Transverse colon (tissue), 4 donors: ENCODE measurements at regions of chr21 and their contacts with region 1.

Region 1: DNA sequence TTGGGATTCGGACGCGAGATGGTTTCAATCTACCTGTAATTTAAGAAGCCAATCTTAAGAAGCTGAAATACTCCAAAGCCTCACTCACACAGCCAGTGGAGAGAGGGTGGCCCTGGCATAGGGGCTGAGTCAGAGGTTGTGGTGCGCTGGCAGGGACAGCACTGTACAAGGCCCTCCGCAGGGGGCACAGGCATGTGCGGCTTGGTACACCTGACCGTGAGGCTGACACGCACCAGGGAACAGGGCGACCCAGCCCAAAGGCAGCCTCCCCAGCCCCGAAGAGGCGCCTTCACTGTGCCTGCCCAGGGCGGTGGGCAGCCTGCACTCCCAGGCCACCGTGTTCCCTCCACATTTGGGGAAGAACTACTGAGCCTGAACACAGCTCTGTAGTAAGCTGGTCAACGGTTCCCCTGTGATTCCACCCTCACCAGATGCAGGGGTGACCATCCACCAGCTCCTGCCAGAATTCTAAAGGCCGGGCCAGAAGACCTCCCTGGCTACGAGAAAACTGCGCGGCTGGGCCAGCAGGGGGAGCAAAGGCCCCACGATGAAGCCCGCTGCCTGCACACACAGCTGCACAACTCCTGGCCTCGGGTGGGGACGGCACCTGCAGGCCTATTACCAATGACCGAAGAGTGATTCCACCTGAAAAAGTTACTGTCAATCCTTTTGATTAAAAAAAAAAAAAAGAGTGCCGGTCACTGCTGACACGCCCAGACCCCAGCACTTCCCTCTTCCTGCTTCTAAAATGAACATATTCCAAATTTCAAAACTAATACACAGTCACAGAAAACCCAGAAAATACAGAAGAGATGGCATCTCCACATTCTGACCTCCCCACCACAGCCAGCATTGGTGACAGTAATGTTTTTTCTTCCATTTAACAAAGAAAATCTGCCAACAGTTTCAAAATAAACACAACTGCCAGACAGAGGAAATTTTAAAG is 49.6 kb upstream of the RIPK4 start:
- DNase-seq: peak; percentile 75
- H3K4me3 ChIP-seq: no peak overlapping the region
- H3K27ac ChIP-seq: no peak overlapping the region
- H3K4me1 ChIP-seq: peaks cover 0 to 4% (median 2%) of the 10 kb centered on the region in 4 donors
- H3K27me3 ChIP-seq: no peaks in the 10 kb centered on the region
- CTCF ChIP-seq: peak; percentile 63 to 80 (median 71)
- EP300 ChIP-seq: no peak
- POLR2A ChIP-seq: no peak

Region 2: DNA sequence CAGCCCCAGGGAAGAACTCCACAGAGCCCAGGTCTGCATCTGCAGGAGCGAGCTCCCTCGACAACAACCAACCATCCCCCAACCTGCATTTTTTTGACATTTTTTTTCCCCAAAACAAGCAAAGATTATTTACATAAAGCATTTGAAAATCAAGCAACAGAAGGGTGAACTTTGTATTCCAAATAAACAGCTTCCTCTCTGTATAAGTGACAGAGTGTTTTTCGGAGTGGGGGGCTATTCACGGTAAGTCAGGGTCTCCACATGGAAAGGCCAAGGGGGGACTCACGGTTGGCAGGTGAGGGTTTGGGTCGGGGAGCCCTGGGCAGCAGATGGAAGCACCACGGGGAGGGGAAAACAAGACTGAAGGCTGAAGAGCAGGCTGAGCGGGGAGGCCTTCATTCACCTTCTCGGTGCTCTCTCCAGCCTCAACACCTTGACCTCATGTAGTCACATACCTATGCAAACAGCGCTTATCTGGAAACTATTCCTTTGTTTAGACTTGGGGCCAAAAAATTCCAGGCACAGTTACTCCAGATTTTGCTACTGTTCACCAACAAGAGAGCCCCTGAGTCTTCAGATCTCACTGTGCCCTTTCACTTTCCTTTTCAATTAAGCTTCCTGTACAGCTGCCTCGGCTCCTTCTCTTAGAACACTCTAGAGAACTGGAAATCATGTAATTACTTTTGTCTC is 109.8 kb after region 1 on chr21:
- in situ Hi-C with region 1: loop called in 1 of 4 experiments (anchors 25 kb)
- intact Hi-C with region 1: no loop called
- DNase-seq: no peak
- H3K4me3 ChIP-seq: peak overlapping the region; percentile 29 to 48 (median 32)
- H3K27ac ChIP-seq: peak overlapping the region; percentile 83 to 90 (median 86)
- H3K4me1 ChIP-seq: peaks cover 7 to 48% (median 30%) of the 10 kb centered on the region in 4 donors
- H3K27me3 ChIP-seq: no peaks in the 10 kb centered on the region
- CTCF ChIP-seq: no peak
- EP300 ChIP-seq: no peak
- POLR2A ChIP-seq: no peak